ENCODE measurements at regions of chr5 and their contacts with region 1.

Region 1: GRCh38 chr5:54743997-54744788 is 226.6 kb downstream of the SNX18 start:
- DNase-seq: peak; percentile 69 to 78 (median 75)
- H3K4me3 ChIP-seq: no peak overlapping the region
- H3K4me3 Mint-ChIP-seq: peak overlapping the region; percentile 24 to 84 (median 60)
- H3K27ac ChIP-seq: peak overlapping the region; percentile 20
- H3K27ac Mint-ChIP-seq: peak overlapping the region; percentile 82 to 93 (median 84)
- H3K4me1 ChIP-seq: peaks cover 49% of the 10 kb centered on the region
- H3K4me1 Mint-ChIP-seq: peaks cover 25 to 42% (median 33%) of the 10 kb centered on the region in 4 donors
- H3K27me3 ChIP-seq: no peaks in the 10 kb centered on the region
- H3K27me3 Mint-ChIP-seq: no peaks in the 10 kb centered on the region

Region 2: DNA sequence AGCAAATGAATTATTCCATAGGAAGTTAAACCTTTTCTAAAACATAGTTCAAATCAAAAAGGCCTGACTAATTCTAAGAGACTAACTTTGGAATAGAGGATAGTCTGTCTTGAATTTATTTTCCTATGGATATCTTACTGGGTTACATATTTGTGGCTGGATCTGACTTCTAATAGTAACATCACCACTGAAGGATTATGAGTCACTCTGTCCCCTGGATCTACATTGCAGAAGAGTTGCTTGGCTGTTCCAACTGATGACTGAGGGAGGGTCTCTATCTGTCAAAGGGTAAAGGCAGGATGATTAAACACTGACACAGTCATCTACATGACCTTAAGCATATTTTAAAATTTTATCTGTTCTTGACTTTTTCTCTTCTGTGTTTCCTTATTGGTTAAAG is 1383.4 kb before region 1 on chr5:
- CTCF ChIA-PET with region 1: no interaction called
- POLR2A ChIA-PET with region 1: no interaction called
- intact Hi-C with region 1: no loop called
- DNase-seq: no peak
- H3K4me3 ChIP-seq: no peak overlapping the region
- H3K4me3 Mint-ChIP-seq: no peak overlapping the region
- H3K27ac ChIP-seq: no peak overlapping the region
- H3K27ac Mint-ChIP-seq: no peak overlapping the region
- H3K4me1 ChIP-seq: no peaks in the 10 kb centered on the region
- H3K4me1 Mint-ChIP-seq: no peaks in the 10 kb centered on the region
- H3K27me3 ChIP-seq: no peaks in the 10 kb centered on the region
- H3K27me3 Mint-ChIP-seq: peaks cover 0 to 4% of the 10 kb centered on the region in 2 donors

Region 3: GRCh38 chr5:53917095-53917494 is 827.1 kb before region 1 on chr5:
- CTCF ChIA-PET with region 1: no interaction called
- POLR2A ChIA-PET with region 1: no interaction called
- intact Hi-C with region 1: no loop called
- DNase-seq: no peak
- H3K4me3 ChIP-seq: no peak overlapping the region
- H3K4me3 Mint-ChIP-seq: no peak overlapping the region
- H3K27ac ChIP-seq: no peak overlapping the region
- H3K27ac Mint-ChIP-seq: no peak overlapping the region
- H3K4me1 ChIP-seq: no peaks in the 10 kb centered on the region
- H3K4me1 Mint-ChIP-seq: peaks cover 0 to 2% (median 0%) of the 10 kb centered on the region in 4 donors
- H3K27me3 ChIP-seq: no peaks in the 10 kb centered on the region
- H3K27me3 Mint-ChIP-seq: no peaks in the 10 kb centered on the region

Region 4: DNA sequence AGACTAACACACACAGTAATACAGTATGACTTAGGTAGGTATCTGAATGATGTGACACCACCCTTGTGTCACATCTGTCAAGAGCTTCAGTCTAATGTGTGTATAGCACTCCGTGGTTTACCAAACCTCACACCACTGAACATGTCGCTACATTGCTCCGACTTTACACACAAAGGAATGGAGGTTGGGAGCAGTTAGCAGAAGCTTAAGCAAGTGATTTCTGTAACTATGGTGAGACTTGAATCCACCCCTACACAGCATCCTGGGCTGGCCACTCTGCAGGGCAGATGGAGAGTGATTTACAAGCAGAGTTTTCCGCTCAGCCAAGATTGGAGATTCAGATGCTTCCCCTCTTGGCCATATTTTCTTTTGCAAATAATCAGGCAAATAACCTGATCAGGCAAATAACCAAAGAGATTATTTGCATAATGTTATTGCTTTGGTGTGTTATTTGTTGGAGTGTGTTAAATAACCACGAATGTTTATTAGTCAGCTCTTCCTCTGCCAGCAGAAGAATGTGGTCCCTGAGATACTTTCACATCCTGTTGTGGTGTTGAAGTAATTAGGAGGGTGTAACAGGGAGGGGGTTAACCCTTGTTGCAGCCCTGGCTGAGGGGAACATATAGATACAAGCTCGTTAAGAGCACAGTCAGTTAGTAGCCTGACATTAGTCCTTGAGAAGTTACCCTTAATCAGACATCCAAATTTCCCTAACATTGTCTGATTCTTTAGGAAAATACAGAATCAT is 133.8 kb before region 1 on chr5:
- CTCF ChIA-PET with region 1: interaction called, 5 read pairs
- POLR2A ChIA-PET with region 1: interaction called, 34 read pairs
- intact Hi-C with region 1: loop called (anchors 2 kb)
- DNase-seq: peak; percentile 43 to 60 (median 55)
- H3K4me3 ChIP-seq: peak overlapping the region; percentile 3 to 49
- H3K4me3 Mint-ChIP-seq: peak overlapping the region; percentile 54 to 86 (median 77)
- H3K27ac ChIP-seq: no peak overlapping the region
- H3K27ac Mint-ChIP-seq: peak overlapping the region; percentile 64 to 84 (median 68)
- H3K4me1 ChIP-seq: peaks cover 22% of the 10 kb centered on the region
- H3K4me1 Mint-ChIP-seq: peaks cover 23 to 25% (median 25%) of the 10 kb centered on the region in 4 donors
- H3K27me3 ChIP-seq: no peaks in the 10 kb centered on the region
- H3K27me3 Mint-ChIP-seq: no peaks in the 10 kb centered on the region

Region 5: DNA sequence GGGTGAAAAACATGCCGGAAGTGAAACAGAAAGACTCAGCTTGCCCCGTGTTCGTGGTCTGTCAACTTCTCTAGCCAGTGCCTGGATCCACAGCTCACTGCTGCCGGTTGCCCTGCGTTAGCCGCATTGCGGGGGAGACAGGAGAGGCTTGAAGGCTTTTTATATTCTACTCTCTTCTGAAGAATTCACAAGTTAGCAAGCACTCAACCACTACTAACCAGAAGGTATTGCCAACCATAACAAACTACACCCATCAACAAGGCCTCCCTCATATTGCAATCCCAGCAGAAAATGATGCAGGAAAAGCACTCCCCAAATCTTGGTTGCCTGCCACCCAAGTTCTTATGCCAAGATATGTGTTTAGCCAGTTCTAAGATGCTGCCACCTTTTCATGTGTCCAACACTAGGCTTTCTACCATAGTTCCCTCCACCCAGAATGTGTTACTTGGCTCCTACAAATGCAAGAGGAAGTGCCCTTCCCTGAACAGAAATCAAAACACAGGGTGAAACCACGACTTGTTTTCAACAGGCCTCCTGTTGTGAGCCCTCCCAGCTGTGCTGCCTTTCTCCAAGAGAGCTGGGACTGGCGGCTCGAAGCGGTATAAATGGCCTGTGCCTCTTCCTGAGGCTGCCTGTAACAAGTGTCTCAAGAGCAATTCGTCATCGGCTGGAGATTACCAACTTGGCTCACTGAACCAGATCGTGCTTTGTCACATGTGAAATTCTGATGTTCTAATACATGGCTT is 97.7 kb before region 1 on chr5:
- CTCF ChIA-PET with region 1: interaction called, 4 read pairs
- POLR2A ChIA-PET with region 1: interaction called, 23 read pairs
- intact Hi-C with region 1: loop called (anchors 1 kb)
- DNase-seq: peak; percentile 60 to 69 (median 61)
- H3K4me3 ChIP-seq: peak overlapping the region; percentile 31 to 50
- H3K4me3 Mint-ChIP-seq: peak overlapping the region; percentile 72 to 83 (median 76)
- H3K27ac ChIP-seq: peak overlapping the region; percentile 30
- H3K27ac Mint-ChIP-seq: peak overlapping the region; percentile 87 to 95 (median 91)
- H3K4me1 ChIP-seq: peaks cover 53% of the 10 kb centered on the region
- H3K4me1 Mint-ChIP-seq: peaks cover 38 to 64% (median 53%) of the 10 kb centered on the region in 4 donors
- H3K27me3 ChIP-seq: no peaks in the 10 kb centered on the region
- H3K27me3 Mint-ChIP-seq: no peaks in the 10 kb centered on the region

Region 6: DNA sequence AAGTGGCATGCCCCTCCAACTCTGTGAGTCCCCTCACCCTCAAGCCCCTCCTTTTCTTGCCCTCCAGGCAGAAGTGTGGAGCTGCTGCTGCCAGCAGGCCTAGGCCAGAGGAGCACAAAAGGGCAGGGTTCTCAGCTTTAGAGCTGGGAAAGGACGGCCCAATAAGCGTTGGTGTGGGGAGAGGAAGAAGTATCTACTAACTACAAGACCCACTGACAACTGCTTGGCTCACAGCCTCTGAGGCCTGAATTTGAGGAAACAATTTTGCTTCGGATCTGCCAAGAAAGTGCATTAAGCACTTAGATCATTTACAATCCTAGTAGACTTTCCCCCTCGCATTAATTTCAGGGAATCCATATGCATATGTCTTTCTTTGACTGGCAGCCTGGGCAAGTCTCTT is 47.3 kb before region 1 on chr5:
- CTCF ChIA-PET with region 1: no interaction called
- POLR2A ChIA-PET with region 1: interaction called, 4 read pairs
- intact Hi-C with region 1: loop called (anchors 5 kb)
- DNase-seq: no peak
- H3K4me3 ChIP-seq: no peak overlapping the region
- H3K4me3 Mint-ChIP-seq: no peak overlapping the region
- H3K27ac ChIP-seq: no peak overlapping the region
- H3K27ac Mint-ChIP-seq: no peak overlapping the region
- H3K4me1 ChIP-seq: no peaks in the 10 kb centered on the region
- H3K4me1 Mint-ChIP-seq: peaks cover 0 to 4% (median 0%) of the 10 kb centered on the region in 4 donors
- H3K27me3 ChIP-seq: no peaks in the 10 kb centered on the region
- H3K27me3 Mint-ChIP-seq: no peaks in the 10 kb centered on the region

Region 7: GRCh38 chr5:54758038-54758437 is 13.8 kb after region 1 on chr5:
- CTCF ChIA-PET with region 1: interaction called, 7 read pairs
- POLR2A ChIA-PET with region 1: interaction called, 42 read pairs
- intact Hi-C with region 1: no loop called
- DNase-seq: no peak
- H3K4me3 ChIP-seq: no peak overlapping the region
- H3K4me3 Mint-ChIP-seq: no peak overlapping the region
- H3K27ac ChIP-seq: no peak overlapping the region
- H3K27ac Mint-ChIP-seq: no peak overlapping the region
- H3K4me1 ChIP-seq: peaks cover 20% of the 10 kb centered on the region
- H3K4me1 Mint-ChIP-seq: peaks cover 17 to 30% (median 24%) of the 10 kb centered on the region in 4 donors
- H3K27me3 ChIP-seq: no peaks in the 10 kb centered on the region
- H3K27me3 Mint-ChIP-seq: no peaks in the 10 kb centered on the region

Region 8: GRCh38 chr5:54969856-54970828 is 225.9 kb after region 1 on chr5:
- CTCF ChIA-PET with region 1: no interaction called
- POLR2A ChIA-PET with region 1: no interaction called
- intact Hi-C with region 1: no loop called
- DNase-seq: no peak
- H3K4me3 ChIP-seq: no peak overlapping the region
- H3K4me3 Mint-ChIP-seq: no peak overlapping the region
- H3K27ac ChIP-seq: no peak overlapping the region
- H3K27ac Mint-ChIP-seq: no peak overlapping the region
- H3K4me1 ChIP-seq: no peaks in the 10 kb centered on the region
- H3K4me1 Mint-ChIP-seq: peaks cover 0 to 1% (median 0%) of the 10 kb centered on the region in 4 donors
- H3K27me3 ChIP-seq: no peaks in the 10 kb centered on the region
- H3K27me3 Mint-ChIP-seq: peaks cover 0 to 1% of the 10 kb centered on the region in 2 donors

Measured in CD4-positive, alpha-beta memory T cell (primary cell).